Heart right ventricle (tissue), 16 donors: ENCODE measurements at regions of chr1 and their contacts with region 1.

Region 1: GRCh38 chr1:12464598-12465056 is 153.4 kb downstream of the DHRS3 start:
- DNase-seq: no peak
- ATAC-seq: peak; percentile 45 to 73 (median 54)
- H3K4me3 ChIP-seq: no peak overlapping the region
- H3K27ac ChIP-seq: peak overlapping the region in 9 of 10 donors; percentile 4 to 88 (median 42)
- H3K4me1 ChIP-seq: peaks cover 10 to 66% (median 57%) of the 10 kb centered on the region in 9 donors
- H3K27me3 ChIP-seq: no peaks in the 10 kb centered on the region
- CTCF ChIP-seq: no peak

Region 2: DNA sequence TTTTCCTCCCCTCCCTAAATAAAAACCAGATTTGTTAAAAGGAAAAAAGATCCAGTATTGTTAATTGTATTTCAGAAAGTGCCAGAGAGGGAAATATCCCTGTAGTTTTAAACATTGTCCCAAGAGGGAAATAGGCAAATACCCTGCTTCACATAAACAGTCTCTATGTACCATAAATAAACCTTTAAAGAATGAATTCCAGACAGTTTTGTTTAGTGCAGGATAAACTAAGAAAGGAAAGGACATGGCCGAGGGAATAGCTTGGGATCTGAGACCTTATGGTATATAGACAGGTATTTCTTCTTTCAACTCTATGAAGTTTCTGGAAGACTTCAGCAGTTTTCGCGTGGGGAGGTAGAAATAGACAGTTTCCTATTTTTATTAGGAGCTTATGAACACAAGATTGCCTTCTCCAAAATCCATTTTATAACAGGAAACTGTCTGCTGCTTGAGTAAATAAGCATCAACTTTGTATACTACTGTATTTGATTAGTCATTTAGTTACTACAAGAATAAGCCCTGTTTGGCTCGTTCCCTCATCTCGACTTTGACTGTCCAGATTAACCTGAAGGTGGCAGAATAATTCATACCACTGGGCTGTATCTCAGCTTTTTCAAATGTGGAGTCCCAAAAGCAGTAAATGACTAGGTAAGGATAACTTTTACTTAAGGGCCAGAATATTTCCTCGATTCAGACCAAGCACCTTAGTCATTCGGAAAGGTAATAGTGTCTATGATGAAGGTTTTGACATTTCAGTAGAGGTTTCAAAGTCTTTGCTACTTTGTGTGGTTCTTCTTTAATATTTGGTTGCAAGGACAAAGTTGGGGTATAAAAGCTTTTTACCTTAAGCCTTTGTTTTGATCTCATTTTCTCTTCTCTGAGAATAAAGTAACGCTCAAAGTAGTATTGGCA is 57.3 kb before region 1 on chr1:
- intact Hi-C with region 1: loop called in 1 of 10 experiments (anchors 5 kb)
- DNase-seq: peak in 1 of 2 donors; percentile 25
- ATAC-seq: peak; percentile 44 to 82 (median 76)
- H3K4me3 ChIP-seq: no peak overlapping the region
- H3K27ac ChIP-seq: peak overlapping the region in 9 of 10 donors; percentile 7 to 78 (median 67)
- H3K4me1 ChIP-seq: peaks cover 16 to 54% (median 43%) of the 10 kb centered on the region in 9 donors
- H3K27me3 ChIP-seq: no peaks in the 10 kb centered on the region
- CTCF ChIP-seq: peak in 8 of 9 donors; percentile 5 to 69 (median 57)

Region 3: DNA sequence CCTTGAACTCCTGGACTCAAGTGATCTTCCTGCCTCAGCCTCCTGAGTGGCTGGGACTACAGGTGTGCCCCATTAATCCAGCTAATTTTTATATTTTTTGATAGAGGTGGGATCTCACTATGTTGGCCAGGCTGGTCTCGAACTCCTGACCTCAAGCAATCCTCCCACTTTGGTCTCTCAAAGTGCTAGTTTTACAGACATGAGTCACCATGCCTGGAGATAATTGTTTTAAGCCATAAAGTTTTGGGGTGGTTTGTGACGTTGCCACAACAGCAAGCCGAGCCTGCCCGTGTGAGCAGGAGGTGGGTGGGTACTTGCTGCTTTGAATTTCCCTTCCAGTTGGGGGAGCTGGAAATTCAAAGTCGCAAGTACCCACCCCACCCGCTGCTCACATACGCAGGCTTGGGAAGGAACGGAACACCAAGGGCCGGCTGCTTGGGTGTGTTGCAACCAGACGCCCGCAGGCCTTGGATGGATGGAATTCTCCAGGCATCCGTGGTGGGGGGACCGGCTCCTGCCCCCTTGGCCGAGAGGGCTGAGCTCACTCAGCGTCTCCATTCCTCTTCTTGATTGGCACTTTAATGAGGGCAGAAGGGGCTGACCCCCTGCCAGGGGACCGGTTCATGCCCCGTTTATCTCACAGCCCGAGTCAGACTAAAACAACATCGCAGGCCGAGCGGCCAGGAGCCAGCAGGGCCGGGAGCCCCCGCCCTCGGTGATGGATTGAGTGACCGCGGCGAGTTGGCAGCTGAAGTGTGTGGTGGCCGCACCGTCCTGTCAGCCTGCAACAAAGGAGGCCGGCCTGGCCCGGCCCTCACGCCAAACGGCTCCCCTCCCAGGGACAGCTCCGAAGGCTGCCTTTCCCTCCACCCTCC is 75.3 kb after region 1 on chr1:
- intact Hi-C with region 1: no loop called
- DNase-seq: peak; percentile 58 to 82
- ATAC-seq: peak; percentile 68 to 87 (median 84)
- H3K4me3 ChIP-seq: peak overlapping the region in 5 of 10 donors; percentile 1 to 37 (median 21)
- H3K27ac ChIP-seq: peak overlapping the region; percentile 11 to 73 (median 48)
- H3K4me1 ChIP-seq: peaks cover 2 to 42% (median 26%) of the 10 kb centered on the region in 9 donors
- H3K27me3 ChIP-seq: no peaks in the 10 kb centered on the region
- CTCF ChIP-seq: peak in 1 of 9 donors; percentile 8